Right cardiac atrium (tissue), 5 donors: ENCODE measurements at regions of chr11 and their contacts with region 1.

Region 1: DNA sequence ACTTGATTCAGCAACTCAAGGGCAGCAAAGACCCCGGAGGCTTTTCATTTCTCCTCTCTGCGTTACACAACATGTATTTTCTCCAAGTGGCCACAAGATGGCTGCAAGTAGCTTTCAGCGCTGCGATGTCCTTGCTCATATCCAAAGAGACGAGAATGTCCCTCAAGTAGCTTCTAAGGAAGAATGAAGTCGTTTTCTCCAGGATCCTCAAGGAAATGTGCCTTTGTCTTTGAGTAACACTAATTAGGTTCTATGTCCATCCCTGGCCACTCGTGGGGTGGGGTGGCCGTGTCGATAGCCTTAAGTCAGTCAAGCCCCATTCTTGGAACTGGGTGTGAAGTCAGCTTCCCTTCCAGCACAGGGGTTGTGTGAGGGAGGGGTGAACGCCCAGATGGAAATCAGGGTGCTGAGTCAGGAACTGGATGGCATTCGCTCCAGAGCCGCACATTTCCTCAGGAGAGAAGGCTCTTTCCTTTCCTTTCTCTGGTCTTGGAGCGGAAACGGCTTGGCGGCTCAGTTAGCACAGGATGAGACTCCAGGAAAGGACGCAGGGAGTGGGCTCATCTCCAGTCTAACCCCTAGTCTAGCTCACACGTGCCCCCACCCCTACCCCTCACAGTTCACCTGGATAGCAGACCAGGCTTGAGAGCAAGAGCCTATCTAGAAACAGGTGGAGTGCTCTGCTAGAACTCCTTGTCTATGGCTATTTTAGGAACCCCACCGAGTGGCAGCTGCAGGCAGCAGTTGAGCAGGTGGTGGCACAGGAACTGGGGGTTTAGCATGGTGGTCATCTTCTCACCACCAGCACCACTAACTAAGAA is 44.3 kb downstream of the NNMT start:
- DNase-seq: peak; percentile 53 to 69 (median 59)
- ATAC-seq: peak; percentile 90 to 95
- H3K4me3 ChIP-seq: no peak overlapping the region
- H3K27ac ChIP-seq: no peak overlapping the region
- H3K4me1 ChIP-seq: no peaks in the 10 kb centered on the region
- H3K27me3 ChIP-seq: no peaks in the 10 kb centered on the region

Region 2: GRCh38 chr11:114280696-114281095 is 59.8 kb before region 1 on chr11:
- intact Hi-C with region 1: loop called in 1 of 4 experiments (anchors 10 kb)
- DNase-seq: peak; percentile 65 to 86 (median 79)
- ATAC-seq: peak; percentile 83 to 88
- H3K4me3 ChIP-seq: no peak overlapping the region
- H3K27ac ChIP-seq: no peak overlapping the region
- H3K4me1 ChIP-seq: peaks cover 9% of the 10 kb centered on the region
- H3K27me3 ChIP-seq: no peaks in the 10 kb centered on the region

Region 3: GRCh38 chr11:114762408-114762807 is 421.9 kb after region 1 on chr11:
- intact Hi-C with region 1: loop called (anchors 2 to 5 kb)
- DNase-seq: peak; percentile 61 to 87 (median 86)
- ATAC-seq: peak; percentile 85 to 92
- H3K4me3 ChIP-seq: no peak overlapping the region
- H3K27ac ChIP-seq: no peak overlapping the region
- H3K4me1 ChIP-seq: no peaks in the 10 kb centered on the region
- H3K27me3 ChIP-seq: no peaks in the 10 kb centered on the region